ENCODE measurements at regions of chr15 and their contacts with region 1.

Region 1: DNA sequence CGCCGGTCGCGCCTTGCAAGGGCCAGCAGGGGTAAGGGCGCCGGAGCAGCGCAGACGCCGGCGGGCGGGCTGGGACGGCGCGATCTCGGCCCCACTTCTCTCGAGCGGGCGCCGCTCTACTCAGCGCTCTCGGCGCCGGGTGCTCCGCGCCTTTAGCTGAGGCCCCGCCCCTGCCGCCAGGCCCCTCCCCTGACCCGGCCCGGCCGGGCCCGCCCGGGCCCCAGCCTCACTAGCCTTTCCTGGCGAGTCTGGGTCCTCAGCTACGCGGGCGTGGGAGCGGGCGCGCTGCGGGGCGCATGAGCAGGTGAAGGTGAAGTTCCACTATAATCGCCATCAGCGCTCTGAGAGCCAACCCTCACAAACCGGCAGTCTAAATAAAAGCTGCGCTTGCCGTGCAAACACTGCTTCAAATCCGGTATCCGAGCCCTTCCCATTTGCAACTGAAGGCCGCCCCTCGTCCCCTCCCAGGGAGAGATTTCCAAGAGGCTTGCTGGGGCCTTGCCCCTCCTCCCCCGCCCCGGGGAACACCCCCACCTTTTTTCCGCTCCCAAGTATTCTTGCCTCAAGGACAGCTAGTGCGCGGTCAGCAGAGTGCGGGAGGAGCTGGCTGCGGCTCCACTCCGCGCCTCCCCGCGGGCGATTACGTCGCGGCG is at the start of gene RPP25:
- DNase-seq: peak; percentile 44 to 53
- ATAC-seq: peak; percentile 83 to 87
- H3K4me3 ChIP-seq: peak within 1 kb of the TSS; percentile 58 to 76 (median 68)
- H3K27ac ChIP-seq: peak within 1 kb of the TSS; percentile 67 to 74 (median 72)
- H3K4me1 ChIP-seq: peaks cover 15 to 25% of the 10 kb centered on the region in 2 donors
- H3K27me3 ChIP-seq: peaks cover 46 to 50% (median 49%) of the 10 kb centered on the region in 3 donors
- CTCF ChIP-seq: no peak
- POLR2A ChIP-seq: peak; percentile 54 to 75
- total RNA-seq, gene RPP25: 1.0 to 5.1 (median 1.9) TPM

Region 2: GRCh38 chr15:74873036-74873755 is 83.6 kb before region 1 on chr15 and contains the start of gene SCAMP2:
- in situ Hi-C with region 1: no loop called
- intact Hi-C with region 1: loop called (anchors 1 kb)
- DNase-seq: peak; percentile 94
- ATAC-seq: peak; percentile 90 to 94
- H3K4me3 ChIP-seq: peak within 1 kb of the TSS; percentile 74 to 91 (median 84)
- H3K27ac ChIP-seq: peak within 1 kb of the TSS; percentile 94 to 99 (median 96)
- H3K4me1 ChIP-seq: peaks cover 41 to 52% of the 10 kb centered on the region in 2 donors
- H3K27me3 ChIP-seq: no peaks in the 10 kb centered on the region
- CTCF ChIP-seq: peak in 1 of 5 experiments; percentile 12
- POLR2A ChIP-seq: peak; percentile 82 to 90
- total RNA-seq, gene SCAMP2: 46.3 to 122 (median 74.3) TPM

Region 3: GRCh38 chr15:74937596-74938296 is 19.0 kb before region 1 on chr15 and contains the start of gene COX5A:
- in situ Hi-C with region 1: no loop called
- intact Hi-C with region 1: loop called (anchors 2 kb)
- DNase-seq: peak; percentile 92 to 96
- ATAC-seq: peak; percentile 94 to 95
- H3K4me3 ChIP-seq: peak within 1 kb of the TSS; percentile 74 to 93 (median 90)
- H3K27ac ChIP-seq: peak within 1 kb of the TSS; percentile 96 to 100 (median 96)
- H3K4me1 ChIP-seq: peaks cover 32 to 35% of the 10 kb centered on the region in 2 donors
- H3K27me3 ChIP-seq: no peaks in the 10 kb centered on the region
- CTCF ChIP-seq: peak in 1 of 5 experiments; percentile 17
- POLR2A ChIP-seq: peak; percentile 91 to 93
- total RNA-seq, gene COX5A: 425 to 558 (median 512) TPM

Region 4: GRCh38 chr15:75023181-75023871 is 66.6 kb after region 1 on chr15 and contains the start of gene PPCDC:
- in situ Hi-C with region 1: no loop called
- intact Hi-C with region 1: loop called (anchors 2 kb)
- DNase-seq: peak; percentile 95
- ATAC-seq: peak; percentile 97 to 98
- H3K4me3 ChIP-seq: peak within 1 kb of the TSS; percentile 80 to 92 (median 84)
- H3K27ac ChIP-seq: peak within 1 kb of the TSS; percentile 88 to 96 (median 90)
- H3K4me1 ChIP-seq: peaks cover 0 to 14% of the 10 kb centered on the region in 2 donors
- H3K27me3 ChIP-seq: no peaks in the 10 kb centered on the region
- CTCF ChIP-seq: no peak
- POLR2A ChIP-seq: peak; percentile 82 to 87
- total RNA-seq, gene PPCDC: 5.5 to 20.2 (median 11.9) TPM